ENCODE measurements at regions of chr18 and their contacts with region 1.

Region 1: DNA sequence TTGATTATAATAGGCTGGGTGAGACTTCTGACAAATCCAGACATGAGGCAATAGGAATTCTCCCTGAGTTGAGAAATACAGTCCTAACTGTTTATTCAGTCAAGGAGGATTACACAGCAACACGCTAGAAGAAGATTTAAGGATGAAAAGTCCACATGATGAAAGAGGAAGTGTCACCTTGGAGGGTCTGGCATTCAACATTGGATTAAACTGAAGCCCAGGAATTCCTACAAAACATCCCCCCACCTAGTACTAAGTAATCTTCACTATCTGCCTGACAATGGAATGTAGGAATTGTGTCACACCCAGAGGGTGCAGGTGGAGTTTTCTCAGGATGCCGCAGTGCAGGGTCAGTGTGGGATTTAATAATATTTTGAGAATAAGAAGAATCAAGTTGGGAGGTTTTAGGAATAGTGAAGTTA is 142.4 kb downstream of the SOCS6 start:
- DNase-seq: peak; percentile 71 to 76
- H3K4me3 ChIP-seq: no peak overlapping the region
- H3K4me3 Mint-ChIP-seq: peak overlapping the region; percentile 66
- H3K27ac Mint-ChIP-seq: peak overlapping the region; percentile 96
- H3K4me1 ChIP-seq: peaks cover 54% of the 10 kb centered on the region
- H3K4me1 Mint-ChIP-seq: peaks cover 7% of the 10 kb centered on the region
- H3K27me3 ChIP-seq: no peaks in the 10 kb centered on the region
- H3K27me3 Mint-ChIP-seq: no peaks in the 10 kb centered on the region
- CTCF ChIP-seq: no peak

Region 2: GRCh38 chr18:70181015-70181414 is 250.2 kb before region 1 on chr18:
- CTCF ChIA-PET with region 1: no interaction called
- POLR2A ChIA-PET with region 1: no interaction called
- intact Hi-C with region 1: loop called (anchors 1 kb)
- DNase-seq: peak in 1 of 2 experiments; percentile 47
- H3K4me3 ChIP-seq: no peak overlapping the region
- H3K4me3 Mint-ChIP-seq: peak overlapping the region; percentile 56
- H3K27ac Mint-ChIP-seq: peak overlapping the region; percentile 64
- H3K4me1 ChIP-seq: peaks cover 25% of the 10 kb centered on the region; the same call in 1 of the 2 replicates
- H3K4me1 Mint-ChIP-seq: peaks cover 17% of the 10 kb centered on the region
- H3K27me3 ChIP-seq: no peaks in the 10 kb centered on the region
- H3K27me3 Mint-ChIP-seq: no peaks in the 10 kb centered on the region
- CTCF ChIP-seq: no peak

Region 3: GRCh38 chr18:70205421-70206397 is 225.5 kb before region 1 on chr18 and contains the start of gene RTTN:
- CTCF ChIA-PET with region 1: interaction called, 5 read pairs
- POLR2A ChIA-PET with region 1: no interaction called
- intact Hi-C with region 1: loop called (anchors 1 kb)
- DNase-seq: peak; percentile 87 to 91
- H3K4me3 ChIP-seq: peak within 1 kb of the TSS; percentile 69
- H3K4me3 Mint-ChIP-seq: peak within 1 kb of the TSS; percentile 83
- H3K27ac Mint-ChIP-seq: peak within 1 kb of the TSS; percentile 95
- H3K4me1 ChIP-seq: no peaks in the 10 kb centered on the region
- H3K4me1 Mint-ChIP-seq: no peaks in the 10 kb centered on the region
- H3K27me3 ChIP-seq: no peaks in the 10 kb centered on the region
- H3K27me3 Mint-ChIP-seq: no peaks in the 10 kb centered on the region
- CTCF ChIP-seq: no peak
- total RNA-seq, gene RTTN: 12.1 and 14.6 TPM in 2 replicates

Region 4: GRCh38 chr18:70310560-70311320 is 120.5 kb before region 1 on chr18:
- CTCF ChIA-PET with region 1: no interaction called
- POLR2A ChIA-PET with region 1: no interaction called
- intact Hi-C with region 1: loop called (anchors 5 kb)
- DNase-seq: no peak
- H3K4me3 ChIP-seq: no peak overlapping the region
- H3K4me3 Mint-ChIP-seq: no peak overlapping the region
- H3K27ac Mint-ChIP-seq: no peak overlapping the region
- H3K4me1 ChIP-seq: peaks cover 6% of the 10 kb centered on the region; the same call in 1 of the 2 replicates
- H3K4me1 Mint-ChIP-seq: no peaks in the 10 kb centered on the region
- H3K27me3 ChIP-seq: no peaks in the 10 kb centered on the region
- H3K27me3 Mint-ChIP-seq: no peaks in the 10 kb centered on the region
- CTCF ChIP-seq: no peak

Region 5: GRCh38 chr18:70377317-70377799 is 53.9 kb before region 1 on chr18:
- CTCF ChIA-PET with region 1: interaction called, 5 read pairs
- POLR2A ChIA-PET with region 1: interaction called, 6 read pairs
- intact Hi-C with region 1: loop called (anchors 1 kb)
- DNase-seq: peak; percentile 42 to 46
- H3K4me3 ChIP-seq: no peak overlapping the region
- H3K4me3 Mint-ChIP-seq: peak overlapping the region; percentile 50
- H3K27ac Mint-ChIP-seq: peak overlapping the region; percentile 95
- H3K4me1 ChIP-seq: peaks cover 83% of the 10 kb centered on the region
- H3K4me1 Mint-ChIP-seq: peaks cover 31% of the 10 kb centered on the region
- H3K27me3 ChIP-seq: no peaks in the 10 kb centered on the region
- H3K27me3 Mint-ChIP-seq: no peaks in the 10 kb centered on the region
- CTCF ChIP-seq: no peak

Region 6: GRCh38 chr18:70491734-70492348 is 60.6 kb after region 1 on chr18:
- CTCF ChIA-PET with region 1: no interaction called
- POLR2A ChIA-PET with region 1: no interaction called
- intact Hi-C with region 1: no loop called
- DNase-seq: peak; percentile 40 to 52
- H3K4me3 ChIP-seq: no peak overlapping the region
- H3K4me3 Mint-ChIP-seq: no peak overlapping the region
- H3K27ac Mint-ChIP-seq: no peak overlapping the region
- H3K4me1 ChIP-seq: no peaks in the 10 kb centered on the region
- H3K4me1 Mint-ChIP-seq: no peaks in the 10 kb centered on the region
- H3K27me3 ChIP-seq: no peaks in the 10 kb centered on the region
- H3K27me3 Mint-ChIP-seq: no peaks in the 10 kb centered on the region
- CTCF ChIP-seq: peak; percentile 39 to 57

Measured in Caco-2 (cell line).